Activated T-helper 2 cell treated with anti-CD3 and anti-CD28 coated beads, Interferon-gamma antibody, Interleukin-2, Interleukin-4, amounts not matched to agents 10 μg/mL and 5 μg/mL and 100 μg/mL, durations not matched to agents 14 hours and 24 hours and 36 hours (primary cell): ENCODE measurements at regions of chr15 and their contacts with region 1.

Region 1: GRCh38 chr15:29090617-29091466 is 178.8 kb downstream of the NSMCE3 start:
- DNase-seq: peak; percentile 20
- H3K4me3 Mint-ChIP-seq: no peak overlapping the region
- H3K27ac Mint-ChIP-seq: no peak overlapping the region
- H3K4me1 Mint-ChIP-seq: peaks cover 11% of the 10 kb centered on the region
- H3K27me3 Mint-ChIP-seq: no peaks in the 10 kb centered on the region

Region 2: GRCh38 chr15:28994831-28995596 is 95.8 kb before region 1 on chr15:
- intact Hi-C with region 1: loop called (anchors 10 kb)
- DNase-seq: no peak
- H3K4me3 Mint-ChIP-seq: no peak overlapping the region
- H3K27ac Mint-ChIP-seq: no peak overlapping the region
- H3K4me1 Mint-ChIP-seq: peaks cover 5% of the 10 kb centered on the region
- H3K27me3 Mint-ChIP-seq: no peaks in the 10 kb centered on the region

Region 3: GRCh38 chr15:29045717-29046116 is 45.1 kb before region 1 on chr15:
- intact Hi-C with region 1: loop called (anchors 5 kb)
- DNase-seq: no peak
- H3K4me3 Mint-ChIP-seq: no peak overlapping the region
- H3K27ac Mint-ChIP-seq: no peak overlapping the region
- H3K4me1 Mint-ChIP-seq: peaks cover 11% of the 10 kb centered on the region
- H3K27me3 Mint-ChIP-seq: peaks cover 5% of the 10 kb centered on the region